ENCODE measurements at regions of chr15 and their contacts with region 1.

Region 1: GRCh38 chr15:29788433-29789034 is 33.7 kb downstream of the TJP1 start:
- DNase-seq: no peak
- ATAC-seq: no peak
- H3K4me3 ChIP-seq: no peak overlapping the region
- H3K27ac ChIP-seq: no peak overlapping the region
- H3K4me1 ChIP-seq: peaks cover 0 to 68% (median 38%) of the 10 kb centered on the region in 9 donors
- H3K27me3 ChIP-seq: no peaks in the 10 kb centered on the region
- CTCF ChIP-seq: no peak

Region 2: GRCh38 chr15:29835301-29835700 is 46.8 kb after region 1 on chr15:
- intact Hi-C with region 1: loop called in 1 of 10 experiments (anchors 10 kb)
- DNase-seq: peak in 1 of 2 donors; percentile 58
- ATAC-seq: peak; percentile 76 to 92 (median 88)
- H3K4me3 ChIP-seq: no peak overlapping the region
- H3K27ac ChIP-seq: peak overlapping the region; percentile 4 to 79 (median 68)
- H3K4me1 ChIP-seq: peaks cover 2 to 53% (median 33%) of the 10 kb centered on the region in 9 donors
- H3K27me3 ChIP-seq: peaks cover 0 to 6% (median 0%) of the 10 kb centered on the region in 7 donors
- CTCF ChIP-seq: no peak

Measured in heart right ventricle (tissue), 16 donors.